Activated B cell treated with CpG ODN at 0.5 μM for 24 hours (primary cell): ENCODE measurements at regions of chr1 and their contacts with region 1.

Region 1: DNA sequence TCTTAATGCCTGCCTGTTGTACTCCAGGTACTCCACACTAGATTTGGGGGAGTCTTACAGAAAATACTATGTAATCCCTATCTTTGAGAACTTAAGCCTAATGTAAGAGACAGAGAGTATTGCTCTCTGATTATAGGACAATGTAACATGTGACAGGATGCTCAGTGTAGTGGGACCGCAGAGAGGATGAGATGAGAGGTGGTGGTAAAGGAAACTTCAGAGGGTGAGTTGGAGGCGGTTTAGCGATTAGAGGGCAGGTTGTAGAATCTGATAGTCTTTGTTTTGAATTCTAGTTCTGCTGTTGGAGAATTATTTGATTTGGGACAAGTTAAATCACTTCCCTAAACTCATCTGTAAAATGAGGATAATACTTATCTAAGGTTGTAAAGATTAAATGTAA is 5.4 kb downstream of the SOAT1 start:
- DNase-seq: no peak
- ATAC-seq: peak; percentile 59
- H3K4me3 Mint-ChIP-seq: no peak overlapping the region
- H3K27ac Mint-ChIP-seq: peak overlapping the region; percentile 26
- H3K4me1 Mint-ChIP-seq: peaks cover 48% of the 10 kb centered on the region
- H3K27me3 Mint-ChIP-seq: no peaks in the 10 kb centered on the region
- CTCF ChIP-seq: no peak

Region 2: GRCh38 chr1:178682429-178682828 is 616.5 kb before region 1 on chr1:
- CTCF ChIA-PET with region 1: no interaction called
- POLR2A ChIA-PET with region 1: no interaction called
- intact Hi-C with region 1: no loop called
- DNase-seq: no peak
- ATAC-seq: no peak
- H3K4me3 Mint-ChIP-seq: no peak overlapping the region
- H3K27ac Mint-ChIP-seq: peak overlapping the region; percentile 37
- H3K4me1 Mint-ChIP-seq: peaks cover 53% of the 10 kb centered on the region
- H3K27me3 Mint-ChIP-seq: no peaks in the 10 kb centered on the region
- CTCF ChIP-seq: no peak

Region 3: GRCh38 chr1:179314928-179315327 is 16.0 kb after region 1 on chr1:
- CTCF ChIA-PET with region 1: interaction called, 3 read pairs
- POLR2A ChIA-PET with region 1: no interaction called
- intact Hi-C with region 1: loop called (anchors 2 kb)
- DNase-seq: no peak
- ATAC-seq: no peak
- H3K4me3 Mint-ChIP-seq: no peak overlapping the region
- H3K27ac Mint-ChIP-seq: no peak overlapping the region
- H3K4me1 Mint-ChIP-seq: peaks cover 9% of the 10 kb centered on the region
- H3K27me3 Mint-ChIP-seq: no peaks in the 10 kb centered on the region
- CTCF ChIP-seq: no peak